Lower leg skin (tissue), 4 donors: ENCODE measurements at regions of chr3 and their contacts with region 1.

Region 1: GRCh38 chr3:46895204-46895660 is 17.7 kb downstream of the PTH1R start:
- DNase-seq: peak; percentile 46 to 93
- H3K4me3 ChIP-seq: no peak overlapping the region
- CTCF ChIP-seq: no peak
- POLR2A ChIP-seq: no peak

Region 2: GRCh38 chr3:46705022-46705530 is 190.2 kb before region 1 on chr3:
- intact Hi-C with region 1: loop called (anchors 5 kb)
- DNase-seq: peak; percentile 71 to 96
- H3K4me3 ChIP-seq: no peak overlapping the region
- CTCF ChIP-seq: peak in 1 of 3 donors; percentile 95
- POLR2A ChIP-seq: no peak